Sciatic nerve (tissue), 2 donors: ENCODE measurements at regions of chr1 and their contacts with region 1.

Region 1: GRCh38 chr1:241611063-241611462 is 29.1 kb downstream of the CHML start:
- DNase-seq: no peak
- ATAC-seq: peak; percentile 85

Region 2: GRCh38 chr1:241834733-241835377 is 223.8 kb after region 1 on chr1:
- intact Hi-C with region 1: loop called (anchors 10 kb)
- DNase-seq: no peak
- ATAC-seq: no peak